CD8-positive, alpha-beta T cell (primary cell): ENCODE measurements at regions of chr17 and their contacts with region 1.

Region 1: GRCh38 chr17:66200685-66201092 is 8.8 kb upstream of the CEP112 start:
- DNase-seq: peak in 8 of 9 experiments; percentile 3 to 74 (median 28)
- ATAC-seq: peak; percentile 42
- H3K4me3 ChIP-seq: no peak overlapping the region
- H3K4me3 Mint-ChIP-seq: no peak overlapping the region
- H3K27ac ChIP-seq: no peak overlapping the region
- H3K27ac Mint-ChIP-seq: no peak overlapping the region
- H3K4me1 ChIP-seq: peaks cover 18% of the 10 kb centered on the region
- H3K4me1 Mint-ChIP-seq: peaks cover 19% of the 10 kb centered on the region
- H3K27me3 ChIP-seq: no peaks in the 10 kb centered on the region
- H3K27me3 Mint-ChIP-seq: no peaks in the 10 kb centered on the region
- CTCF ChIP-seq: peak; percentile 33

Region 2: GRCh38 chr17:65886315-65887245 is 314.1 kb before region 1 on chr17:
- CTCF ChIA-PET with region 1: no interaction called
- POLR2A ChIA-PET with region 1: no interaction called
- intact Hi-C with region 1: no loop called
- DNase-seq: no peak
- ATAC-seq: no peak
- H3K4me3 ChIP-seq: no peak overlapping the region
- H3K4me3 Mint-ChIP-seq: no peak overlapping the region
- H3K27ac ChIP-seq: no peak overlapping the region
- H3K27ac Mint-ChIP-seq: no peak overlapping the region
- H3K4me1 ChIP-seq: no peaks in the 10 kb centered on the region
- H3K4me1 Mint-ChIP-seq: no peaks in the 10 kb centered on the region
- H3K27me3 ChIP-seq: no peaks in the 10 kb centered on the region
- H3K27me3 Mint-ChIP-seq: no peaks in the 10 kb centered on the region
- CTCF ChIP-seq: no peak

Region 3: DNA sequence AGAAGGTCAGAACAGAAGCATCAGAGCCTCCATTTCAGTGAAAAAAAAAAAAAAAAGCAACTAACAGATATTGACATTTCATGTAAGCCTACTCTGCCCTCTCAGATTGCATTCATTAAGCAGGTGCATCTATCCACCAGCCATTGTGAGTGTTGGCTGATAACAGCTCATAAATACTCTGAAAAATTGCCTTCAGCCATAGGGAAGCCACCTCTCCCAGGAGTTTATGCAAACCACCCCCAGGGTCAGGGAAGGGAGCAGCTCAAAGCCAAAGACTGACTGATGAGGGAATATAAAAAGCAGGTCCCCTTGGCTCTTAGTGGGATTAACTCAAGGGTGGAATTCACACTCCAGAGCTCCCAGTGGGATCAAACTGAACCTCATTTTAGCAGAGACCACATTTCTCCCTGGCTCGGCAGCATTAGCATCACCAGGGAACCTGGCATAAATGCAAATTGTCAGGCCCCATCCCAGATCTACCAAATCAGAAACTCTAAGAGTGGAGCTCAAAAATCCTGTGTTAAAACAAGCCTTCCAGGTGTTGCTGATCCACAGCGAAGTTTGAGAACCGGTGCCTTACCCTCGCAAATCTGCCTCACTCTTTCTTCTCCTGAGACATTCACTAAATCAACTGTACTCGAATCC is 14.3 kb after region 1 on chr17:
- CTCF ChIA-PET with region 1: interaction called, 16 read pairs
- POLR2A ChIA-PET with region 1: interaction called, 4 read pairs
- intact Hi-C with region 1: no loop called
- DNase-seq: no peak
- ATAC-seq: no peak
- H3K4me3 ChIP-seq: no peak overlapping the region
- H3K4me3 Mint-ChIP-seq: no peak overlapping the region
- H3K27ac ChIP-seq: no peak overlapping the region
- H3K27ac Mint-ChIP-seq: no peak overlapping the region
- H3K4me1 ChIP-seq: no peaks in the 10 kb centered on the region
- H3K4me1 Mint-ChIP-seq: no peaks in the 10 kb centered on the region
- H3K27me3 ChIP-seq: peaks cover 0 to 4% of the 10 kb centered on the region in 2 experiments
- H3K27me3 Mint-ChIP-seq: peaks cover 5% of the 10 kb centered on the region
- CTCF ChIP-seq: no peak

Region 4: DNA sequence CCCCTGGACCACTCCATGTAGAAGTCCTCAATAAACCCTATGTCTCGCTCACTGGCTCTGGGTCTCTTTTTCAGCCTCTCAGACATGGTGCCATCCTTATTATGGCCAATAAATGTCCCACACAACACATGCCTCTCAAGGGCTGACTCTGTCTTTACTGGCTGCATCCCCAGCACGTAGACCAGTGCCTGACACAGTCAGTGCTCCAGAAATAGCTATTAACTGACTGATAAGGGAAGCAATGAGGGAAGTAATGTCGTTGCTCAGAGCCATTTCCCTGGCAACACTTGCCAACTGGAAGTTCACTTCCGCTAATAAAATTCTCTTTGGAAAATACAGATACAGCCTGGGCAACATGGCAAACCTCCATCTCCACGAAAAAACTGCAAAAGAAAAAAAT is 47.6 kb after region 1 on chr17:
- CTCF ChIA-PET with region 1: interaction called, 3 read pairs
- POLR2A ChIA-PET with region 1: no interaction called
- intact Hi-C with region 1: loop called (anchors 2 to 5 kb)
- DNase-seq: no peak
- ATAC-seq: no peak
- H3K4me3 ChIP-seq: no peak overlapping the region
- H3K4me3 Mint-ChIP-seq: no peak overlapping the region
- H3K27ac ChIP-seq: no peak overlapping the region
- H3K27ac Mint-ChIP-seq: no peak overlapping the region
- H3K4me1 ChIP-seq: peaks cover 24% of the 10 kb centered on the region
- H3K4me1 Mint-ChIP-seq: peaks cover 29% of the 10 kb centered on the region
- H3K27me3 ChIP-seq: no peaks in the 10 kb centered on the region
- H3K27me3 Mint-ChIP-seq: no peaks in the 10 kb centered on the region
- CTCF ChIP-seq: no peak

Region 5: GRCh38 chr17:66426397-66427033 is 225.8 kb after region 1 on chr17:
- CTCF ChIA-PET with region 1: no interaction called
- POLR2A ChIA-PET with region 1: no interaction called
- intact Hi-C with region 1: loop called (anchors 2 kb)
- DNase-seq: peak; percentile 14 to 81 (median 49)
- ATAC-seq: peak; percentile 98
- H3K4me3 ChIP-seq: no peak overlapping the region
- H3K4me3 Mint-ChIP-seq: peak overlapping the region; percentile 48
- H3K27ac ChIP-seq: no peak overlapping the region
- H3K27ac Mint-ChIP-seq: peak overlapping the region; percentile 82
- H3K4me1 ChIP-seq: peaks cover 19% of the 10 kb centered on the region
- H3K4me1 Mint-ChIP-seq: peaks cover 64% of the 10 kb centered on the region
- H3K27me3 ChIP-seq: no peaks in the 10 kb centered on the region
- H3K27me3 Mint-ChIP-seq: no peaks in the 10 kb centered on the region
- CTCF ChIP-seq: peak; percentile 48

Region 6: DNA sequence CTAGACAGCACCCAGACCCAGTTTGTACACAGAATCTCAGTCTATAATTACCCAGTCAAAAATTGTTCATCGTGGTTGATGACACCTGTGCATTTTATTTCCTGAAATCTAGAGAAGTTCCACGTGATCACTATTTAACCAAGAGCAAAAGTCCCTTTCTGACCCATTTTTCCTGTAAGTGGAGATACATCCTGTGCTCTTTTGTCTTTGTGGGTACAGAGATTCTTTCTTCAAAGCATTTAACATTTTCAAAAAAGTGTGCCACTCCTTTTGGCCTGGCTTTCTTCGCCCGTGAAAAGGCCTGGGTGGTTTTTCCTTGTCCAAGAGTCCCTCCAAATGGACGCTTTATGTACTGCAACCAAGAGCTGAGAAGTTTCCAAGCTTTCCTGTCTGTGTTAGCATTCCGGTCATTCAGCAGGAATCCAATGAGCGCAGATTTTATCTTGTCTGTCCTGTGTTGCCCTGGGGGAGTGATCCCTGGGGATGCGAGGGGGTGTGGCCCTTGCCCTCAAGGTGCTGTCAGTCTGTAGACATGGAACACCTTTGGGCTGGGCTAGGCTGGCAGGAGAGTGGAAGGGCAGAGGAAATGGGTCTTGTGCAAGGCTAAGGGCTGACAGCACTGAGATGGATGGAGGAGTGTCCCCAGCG is 473.1 kb after region 1 on chr17:
- CTCF ChIA-PET with region 1: interaction called, 5 read pairs
- POLR2A ChIA-PET with region 1: no interaction called
- intact Hi-C with region 1: loop called (anchors 1 to 5 kb)
- DNase-seq: peak; percentile 6 to 87 (median 57)
- ATAC-seq: peak; percentile 86
- H3K4me3 ChIP-seq: no peak overlapping the region
- H3K4me3 Mint-ChIP-seq: peak overlapping the region; percentile 23
- H3K27ac ChIP-seq: peak overlapping the region in 1 of 2 experiments; percentile 45
- H3K27ac Mint-ChIP-seq: peak overlapping the region; percentile 91
- H3K4me1 ChIP-seq: peaks cover 23% of the 10 kb centered on the region
- H3K4me1 Mint-ChIP-seq: peaks cover 56% of the 10 kb centered on the region
- H3K27me3 ChIP-seq: no peaks in the 10 kb centered on the region
- H3K27me3 Mint-ChIP-seq: no peaks in the 10 kb centered on the region
- CTCF ChIP-seq: peak; percentile 56

Region 7: GRCh38 chr17:66906321-66907278 is 705.9 kb after region 1 on chr17:
- CTCF ChIA-PET with region 1: interaction called, 8 read pairs
- POLR2A ChIA-PET with region 1: interaction called, 5 read pairs
- intact Hi-C with region 1: loop called in 1 of 2 experiments (anchors 1 kb)
- DNase-seq: peak; percentile 27 to 79 (median 58)
- ATAC-seq: peak; percentile 48
- H3K4me3 ChIP-seq: no peak overlapping the region
- H3K4me3 Mint-ChIP-seq: no peak overlapping the region
- H3K27ac ChIP-seq: no peak overlapping the region
- H3K27ac Mint-ChIP-seq: no peak overlapping the region
- H3K4me1 ChIP-seq: no peaks in the 10 kb centered on the region
- H3K4me1 Mint-ChIP-seq: peaks cover 5% of the 10 kb centered on the region
- H3K27me3 ChIP-seq: no peaks in the 10 kb centered on the region
- H3K27me3 Mint-ChIP-seq: peaks cover 4% of the 10 kb centered on the region
- CTCF ChIP-seq: peak; percentile 67